Ovary (tissue), 10 donors: ENCODE measurements at regions of chr2 and their contacts with region 1.

Region 1: GRCh38 chr2:225660262-225661131 is 261.0 kb downstream of the NYAP2 start:
- DNase-seq: peak; percentile 32 to 80 (median 73)
- H3K4me3 ChIP-seq: no peak overlapping the region
- H3K27ac ChIP-seq: no peak overlapping the region
- H3K4me1 ChIP-seq: no peaks in the 10 kb centered on the region
- H3K27me3 ChIP-seq: no peaks in the 10 kb centered on the region
- CTCF ChIP-seq: peak; percentile 31 to 53 (median 44)
- EP300 ChIP-seq: no peak
- POLR2A ChIP-seq: no peak

Region 2: DNA sequence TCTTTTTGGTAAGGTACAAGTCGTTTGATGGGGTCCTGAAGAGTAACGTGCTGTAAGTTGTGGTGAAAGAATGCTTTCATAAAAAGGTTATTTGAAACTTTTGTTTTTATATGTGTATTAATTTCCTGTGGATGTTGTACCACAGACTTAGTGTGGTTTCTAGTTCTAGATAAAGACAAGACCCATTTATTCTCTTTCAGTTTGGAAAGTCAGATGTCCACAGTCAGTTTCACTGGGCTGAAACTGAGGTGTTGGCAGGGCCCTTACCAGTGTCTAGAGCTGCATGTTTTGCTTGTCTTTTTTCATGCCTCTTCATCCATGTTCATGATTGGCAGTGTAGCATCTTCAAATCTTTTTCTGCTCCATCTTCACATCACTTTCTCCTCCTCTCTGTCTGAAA is 596.1 kb before region 1 on chr2:
- intact Hi-C with region 1: no loop called
- DNase-seq: no peak
- H3K4me3 ChIP-seq: no peak overlapping the region
- H3K27ac ChIP-seq: no peak overlapping the region
- H3K4me1 ChIP-seq: no peaks in the 10 kb centered on the region
- H3K27me3 ChIP-seq: no peaks in the 10 kb centered on the region
- CTCF ChIP-seq: no peak
- EP300 ChIP-seq: no peak
- POLR2A ChIP-seq: no peak

Region 3: DNA sequence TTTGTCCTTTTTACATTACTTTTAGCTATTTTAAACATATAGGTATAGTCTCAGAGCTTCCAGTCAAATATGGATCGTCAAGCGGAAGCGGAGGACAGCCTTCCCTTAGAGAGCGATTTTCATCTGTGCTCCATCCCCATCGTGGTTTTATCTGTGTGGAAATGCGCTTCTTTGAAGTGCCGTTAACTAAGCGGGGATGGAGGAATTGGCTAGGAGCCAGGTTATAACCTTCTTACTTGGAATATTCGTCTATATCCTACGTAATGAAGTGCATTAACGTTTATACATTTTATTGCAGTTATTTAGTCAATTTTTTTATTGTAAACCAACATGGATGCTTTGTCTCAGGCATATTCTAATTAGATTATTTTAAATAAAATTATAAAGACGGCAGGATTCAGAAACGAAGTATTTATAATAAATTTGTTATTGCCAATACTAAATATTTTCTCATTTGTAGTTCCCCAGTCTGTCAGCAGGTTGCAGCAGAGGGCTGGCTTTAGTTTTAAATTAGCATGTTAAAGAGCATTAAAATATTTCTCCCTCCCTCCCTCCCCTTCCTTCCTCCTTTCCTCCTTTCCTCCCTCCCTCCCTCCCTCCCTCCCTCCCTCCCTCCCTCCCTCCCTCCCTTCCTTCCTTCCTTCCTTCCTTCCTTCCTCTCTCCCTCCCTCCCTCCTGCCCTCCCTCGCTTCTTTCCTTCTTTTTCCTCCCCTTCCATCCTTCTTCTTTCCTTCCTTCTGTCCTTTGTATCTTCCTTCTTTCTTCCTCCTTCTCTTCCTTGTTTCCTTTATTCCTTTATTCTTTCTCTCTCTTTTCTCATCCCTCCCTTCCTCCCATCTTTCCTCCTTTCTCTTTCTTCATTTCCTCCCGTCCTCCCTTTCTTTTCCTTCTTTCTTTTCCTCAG is 537.7 kb before region 1 on chr2:
- intact Hi-C with region 1: loop called in 1 of 4 experiments (anchors 10 kb)
- DNase-seq: no peak
- H3K4me3 ChIP-seq: no peak overlapping the region
- H3K27ac ChIP-seq: no peak overlapping the region
- H3K4me1 ChIP-seq: no peaks in the 10 kb centered on the region
- H3K27me3 ChIP-seq: no peaks in the 10 kb centered on the region
- CTCF ChIP-seq: peak in 1 of 3 donors; percentile 11
- EP300 ChIP-seq: no peak
- POLR2A ChIP-seq: no peak

Region 4: DNA sequence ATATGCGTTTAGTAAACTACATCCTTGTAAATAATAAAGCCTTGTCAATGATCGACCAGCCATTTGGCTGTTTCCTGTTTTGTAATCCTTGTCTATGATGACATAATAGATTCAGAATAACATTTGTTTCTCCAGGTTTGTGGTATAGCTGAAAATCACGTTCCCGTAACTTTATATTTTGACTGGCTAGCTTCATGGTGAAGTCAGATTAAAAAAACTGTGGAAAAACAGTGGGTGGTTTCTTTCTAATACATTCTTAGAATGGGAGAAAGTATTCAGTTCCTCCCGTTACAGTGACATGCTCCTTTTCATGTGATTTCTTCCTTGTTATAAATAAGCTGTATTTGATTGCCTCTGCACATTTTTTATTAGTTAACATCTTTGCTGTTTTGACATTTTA is 105.9 kb after region 1 on chr2:
- intact Hi-C with region 1: no loop called
- DNase-seq: no peak
- H3K4me3 ChIP-seq: no peak overlapping the region
- H3K27ac ChIP-seq: peak overlapping the region in 1 of 2 donors; percentile 0
- H3K4me1 ChIP-seq: peaks cover 5% of the 10 kb centered on the region
- H3K27me3 ChIP-seq: no peaks in the 10 kb centered on the region
- CTCF ChIP-seq: no peak
- EP300 ChIP-seq: no peak
- POLR2A ChIP-seq: no peak